ENCODE measurements at regions of chr2 and their contacts with region 1.

Region 1: DNA sequence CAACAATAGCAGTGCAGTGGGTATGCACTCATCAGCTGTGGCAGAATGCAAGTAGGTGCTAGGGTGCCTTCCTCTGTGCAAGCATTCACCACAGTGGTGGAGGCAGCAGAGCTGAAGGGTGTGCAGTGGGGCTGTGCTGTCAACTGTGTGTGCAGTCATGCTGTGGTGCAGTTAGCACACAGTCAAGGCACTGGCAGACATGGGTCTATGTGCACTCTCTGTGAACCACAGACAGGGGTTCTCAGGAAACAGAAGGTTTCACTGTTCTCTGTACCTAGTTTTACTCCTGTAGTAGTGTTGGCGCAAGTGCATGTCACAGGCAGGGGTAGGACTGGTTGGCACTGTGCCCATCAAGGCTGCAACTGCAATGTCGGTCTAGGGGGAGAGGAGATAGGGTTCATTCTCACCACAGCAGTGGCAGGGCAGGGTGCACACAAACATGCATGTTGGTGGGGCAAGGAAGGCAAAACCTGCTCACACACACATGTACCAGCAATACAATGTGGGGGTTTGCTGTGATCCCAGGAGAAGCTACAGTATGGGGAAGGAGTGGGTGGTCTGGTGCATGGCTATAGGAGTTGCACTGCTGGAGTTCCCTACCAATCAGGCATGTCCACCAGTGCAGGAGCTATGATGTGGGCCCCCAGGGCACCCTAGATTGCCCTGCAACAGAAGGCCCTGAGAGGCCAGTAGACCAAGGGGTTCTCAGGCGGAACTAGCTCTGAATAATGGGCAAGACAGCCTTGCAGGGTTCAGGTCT is 242.7 kb upstream of the DDX18 start:
- DNase-seq: no peak
- ATAC-seq: no peak
- H3K4me3 ChIP-seq: no peak overlapping the region
- H3K4me3 Mint-ChIP-seq: no peak overlapping the region
- H3K27ac ChIP-seq: no peak overlapping the region
- H3K27ac Mint-ChIP-seq: no peak overlapping the region
- H3K4me1 ChIP-seq: no peaks in the 10 kb centered on the region
- H3K4me1 Mint-ChIP-seq: no peaks in the 10 kb centered on the region
- H3K27me3 ChIP-seq: no peaks in the 10 kb centered on the region
- H3K27me3 Mint-ChIP-seq: no peaks in the 10 kb centered on the region
- CTCF ChIP-seq: no peak

Region 2: GRCh38 chr2:117587310-117587709 is 15.5 kb after region 1 on chr2:
- CTCF ChIA-PET with region 1: no interaction called
- POLR2A ChIA-PET with region 1: no interaction called
- intact Hi-C with region 1: loop called in 1 of 2 experiments (anchors 1 kb)
- DNase-seq: no peak
- ATAC-seq: no peak
- H3K4me3 ChIP-seq: no peak overlapping the region
- H3K4me3 Mint-ChIP-seq: no peak overlapping the region
- H3K27ac ChIP-seq: no peak overlapping the region
- H3K27ac Mint-ChIP-seq: no peak overlapping the region
- H3K4me1 ChIP-seq: no peaks in the 10 kb centered on the region
- H3K4me1 Mint-ChIP-seq: no peaks in the 10 kb centered on the region
- H3K27me3 ChIP-seq: no peaks in the 10 kb centered on the region
- H3K27me3 Mint-ChIP-seq: no peaks in the 10 kb centered on the region
- CTCF ChIP-seq: no peak

Region 3: GRCh38 chr2:118130385-118130784 is 558.6 kb after region 1 on chr2:
- CTCF ChIA-PET with region 1: no interaction called
- POLR2A ChIA-PET with region 1: no interaction called
- intact Hi-C with region 1: no loop called
- DNase-seq: no peak
- ATAC-seq: no peak
- H3K4me3 ChIP-seq: no peak overlapping the region
- H3K4me3 Mint-ChIP-seq: no peak overlapping the region
- H3K27ac ChIP-seq: no peak overlapping the region
- H3K27ac Mint-ChIP-seq: no peak overlapping the region
- H3K4me1 ChIP-seq: peaks cover 4% of the 10 kb centered on the region
- H3K4me1 Mint-ChIP-seq: peaks cover 14% of the 10 kb centered on the region
- H3K27me3 ChIP-seq: no peaks in the 10 kb centered on the region
- H3K27me3 Mint-ChIP-seq: peaks cover 38% of the 10 kb centered on the region
- CTCF ChIP-seq: no peak

Measured in CD4-positive, alpha-beta T cell (primary cell).